Cardiac septum (tissue), 1 donor: ENCODE measurements at regions of chr9 and their contacts with region 1.

Region 1: DNA sequence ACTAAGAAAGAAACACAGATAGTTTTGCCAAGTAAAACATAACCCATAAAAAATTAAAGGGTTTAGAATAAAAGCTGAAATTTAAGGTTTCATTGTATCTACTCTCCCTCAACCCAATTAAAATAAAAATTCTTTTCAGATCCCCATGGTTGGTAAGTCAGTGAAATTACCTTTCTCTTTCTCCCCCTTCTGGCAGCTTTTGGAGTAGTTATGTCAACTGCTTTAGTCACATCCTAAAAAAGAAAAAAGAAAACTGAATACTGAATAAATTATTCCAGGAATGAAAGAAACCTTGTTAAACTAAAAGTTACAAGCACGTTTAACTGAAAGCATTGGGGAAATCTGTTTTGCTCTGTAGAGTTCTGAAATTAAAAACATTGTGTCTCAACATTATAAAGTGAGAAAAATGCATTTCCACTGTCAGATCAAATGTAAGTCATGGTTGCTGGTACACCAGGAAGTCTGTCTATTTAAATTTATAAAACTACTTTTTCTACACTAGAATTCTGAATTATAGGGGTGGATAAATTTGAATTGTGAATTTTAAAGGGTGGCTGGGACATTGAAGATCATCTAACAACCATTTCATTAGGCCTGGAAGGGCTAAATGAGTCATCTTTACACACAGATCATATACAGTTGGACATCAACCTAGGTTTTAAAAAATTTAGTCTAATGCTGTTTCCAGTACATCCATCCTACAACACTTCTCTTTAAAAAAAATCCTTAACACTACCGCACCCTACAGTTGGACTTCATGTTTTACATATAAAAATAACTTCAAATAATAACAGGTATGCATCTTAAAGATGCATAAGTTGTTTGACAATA is 24.7 kb downstream of the PSIP1 start:
- DNase-seq: no peak

Region 2: GRCh38 chr9:15606643-15607472 is 120.8 kb after region 1 on chr9:
- intact Hi-C with region 1: loop called (anchors 10 kb)
- DNase-seq: no peak

Region 3: DNA sequence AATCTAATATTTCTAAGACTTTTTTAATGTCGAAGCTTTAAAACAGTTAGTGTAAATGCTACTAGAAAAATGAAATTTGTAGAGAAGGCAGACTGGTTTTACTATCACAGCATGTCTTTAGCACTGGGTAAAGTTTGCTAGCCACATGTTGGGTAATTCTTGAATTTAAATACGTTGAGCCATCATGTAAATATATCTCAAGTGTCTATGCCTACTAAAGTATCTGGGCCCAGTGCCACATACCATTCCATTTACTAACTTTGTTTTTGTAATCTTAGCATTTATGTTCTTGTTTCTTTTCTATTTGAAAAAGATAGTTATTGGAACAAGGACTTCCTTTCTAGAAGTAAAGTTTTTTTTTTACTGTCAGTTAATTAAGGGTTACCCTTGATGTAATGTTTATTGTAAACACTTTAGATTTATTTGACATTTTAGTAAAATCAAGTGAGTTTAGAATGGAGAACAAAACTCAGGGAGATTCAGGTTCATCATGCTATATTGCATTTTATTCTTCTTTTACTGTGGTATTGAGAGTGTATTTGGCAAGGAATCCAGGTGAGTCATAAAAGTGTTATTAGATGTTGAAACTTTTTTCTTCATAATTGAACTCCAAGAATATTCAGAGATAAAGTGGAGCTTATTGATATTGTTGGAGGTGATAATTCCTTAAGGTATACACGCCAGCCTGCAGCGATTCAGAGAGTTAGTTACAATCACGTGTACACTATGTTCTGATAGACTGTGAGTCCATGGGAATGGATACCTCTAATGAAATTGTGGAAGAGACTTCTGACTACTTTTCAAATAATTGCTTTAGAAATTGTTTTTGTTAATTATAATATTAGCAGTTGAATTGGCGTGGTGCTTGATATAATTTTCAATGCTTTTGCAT is 249.3 kb after region 1 on chr9:
- intact Hi-C with region 1: no loop called
- DNase-seq: no peak

Region 4: GRCh38 chr9:15786616-15787015 is 300.6 kb after region 1 on chr9:
- intact Hi-C with region 1: no loop called
- DNase-seq: no peak